ENCODE measurements at regions of chr1 and their contacts with region 1.

Region 1: DNA sequence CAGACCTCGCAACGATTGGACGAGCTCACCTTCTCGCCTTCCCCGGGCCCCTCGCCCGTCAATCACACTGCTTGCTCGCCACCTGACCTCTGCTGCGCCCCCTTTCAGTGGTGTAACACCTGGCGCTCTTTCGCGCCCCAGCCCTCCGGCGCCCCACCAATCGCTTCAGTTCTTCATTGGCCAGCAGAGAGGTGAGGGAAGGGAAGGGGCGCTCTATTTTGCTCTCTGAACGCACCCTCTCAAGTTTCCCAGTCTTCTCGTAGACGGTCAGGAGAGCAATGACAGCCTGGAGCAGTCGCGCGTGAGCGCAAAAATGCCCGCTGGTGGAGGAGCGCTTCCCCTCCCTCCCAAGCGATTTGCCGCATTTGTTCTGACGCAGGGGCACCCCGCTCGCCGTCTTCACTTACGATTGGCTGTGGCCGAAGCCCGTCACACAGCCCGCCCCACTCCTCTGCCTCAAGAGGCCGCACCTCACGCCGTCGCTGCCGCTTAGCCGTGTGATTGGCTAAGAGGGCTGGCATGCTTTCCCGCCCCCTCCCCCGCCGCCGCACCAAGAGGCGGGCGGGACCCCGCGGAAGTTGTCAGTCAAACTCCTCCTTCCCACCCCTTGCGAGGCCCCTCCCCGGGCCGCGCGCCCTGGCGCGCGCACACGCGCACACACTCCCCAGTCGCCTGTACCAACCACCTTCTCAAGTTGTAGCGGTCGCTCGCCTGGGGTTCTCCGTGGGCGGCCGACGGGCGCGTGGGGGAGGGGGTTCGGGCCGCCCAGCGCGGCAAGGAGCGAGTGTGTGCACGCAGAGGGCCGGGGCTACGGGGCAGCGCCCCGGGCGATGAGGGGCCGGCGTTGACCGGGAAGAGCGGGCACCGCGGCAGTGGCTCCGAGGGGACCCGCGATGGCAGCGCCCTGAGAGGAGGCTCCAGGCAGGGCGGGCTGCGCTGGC is at the start of gene PPP2R5A:
- DNase-seq: peak; percentile 99
- H3K4me3 ChIP-seq: peak within 1 kb of the TSS; percentile 80
- H3K27ac ChIP-seq: peak within 1 kb of the TSS; percentile 81
- H3K4me1 ChIP-seq: peaks cover 29% of the 10 kb centered on the region
- CTCF ChIP-seq: peak; percentile 73
- total RNA-seq, gene PPP2R5A: 26.8 and 28.0 TPM in 2 replicates

Region 2: GRCh38 chr1:211675230-211676105 is 609.5 kb before region 1 on chr1 and contains the start of gene NEK2:
- CTCF ChIA-PET with region 1: interaction called, 13 read pairs
- POLR2A ChIA-PET with region 1: no interaction called
- intact Hi-C with region 1: loop called (anchors 2 kb)
- DNase-seq: peak; percentile 96
- H3K4me3 ChIP-seq: peak within 1 kb of the TSS; percentile 86
- H3K27ac ChIP-seq: peak within 1 kb of the TSS; percentile 79
- H3K4me1 ChIP-seq: peaks cover 67% of the 10 kb centered on the region
- CTCF ChIP-seq: no peak
- total RNA-seq, gene NEK2: 55.9 and 72.4 TPM in 2 replicates

Region 3: GRCh38 chr1:211698161-211699026 is 586.6 kb before region 1 on chr1:
- CTCF ChIA-PET with region 1: interaction called, 3 read pairs
- POLR2A ChIA-PET with region 1: no interaction called
- intact Hi-C with region 1: loop called (anchors 5 kb)
- DNase-seq: peak; percentile 75
- H3K4me3 ChIP-seq: peak overlapping the region; percentile 30
- H3K27ac ChIP-seq: peak overlapping the region; percentile 22
- H3K4me1 ChIP-seq: peaks cover 42% of the 10 kb centered on the region
- CTCF ChIP-seq: peak; percentile 99

Region 4: GRCh38 chr1:212035123-212035834 is 249.7 kb before region 1 on chr1 and contains the starts of genes DTL and INTS7:
- CTCF ChIA-PET with region 1: no interaction called
- POLR2A ChIA-PET with region 1: interaction called, 14 read pairs
- intact Hi-C with region 1: loop called (anchors 1 kb)
- DNase-seq: peak; percentile 100
- H3K4me3 ChIP-seq: peak within 1 kb of the TSS; percentile 82
- H3K27ac ChIP-seq: peak within 1 kb of the TSS; percentile 80
- H3K4me1 ChIP-seq: peaks cover 63% of the 10 kb centered on the region
- CTCF ChIP-seq: peak; percentile 90
- total RNA-seq, gene DTL: 64.4 and 71.5 TPM in 2 replicates
- total RNA-seq, gene INTS7: 16.7 and 17.8 TPM in 2 replicates

Region 5: GRCh38 chr1:212455803-212456528 is 171.0 kb after region 1 on chr1:
- CTCF ChIA-PET with region 1: no interaction called
- POLR2A ChIA-PET with region 1: interaction called, 5 read pairs
- intact Hi-C with region 1: loop called (anchors 10 kb)
- DNase-seq: peak; percentile 77
- H3K4me3 ChIP-seq: no peak overlapping the region
- H3K27ac ChIP-seq: no peak overlapping the region
- H3K4me1 ChIP-seq: peaks cover 6% of the 10 kb centered on the region
- CTCF ChIP-seq: peak; percentile 99